ENCODE measurements at regions of chr9 and their contacts with region 1.

Region 1: GRCh38 chr9:136283291-136284235 is 20.3 kb downstream of the CCDC187 start:
- DNase-seq: peak; percentile 85
- ATAC-seq: peak; percentile 99
- H3K4me3 Mint-ChIP-seq: no peak overlapping the region
- H3K27ac Mint-ChIP-seq: no peak overlapping the region
- H3K4me1 Mint-ChIP-seq: peaks cover 3% of the 10 kb centered on the region
- H3K27me3 Mint-ChIP-seq: no peaks in the 10 kb centered on the region
- CTCF ChIP-seq: peak; percentile 80

Region 2: DNA sequence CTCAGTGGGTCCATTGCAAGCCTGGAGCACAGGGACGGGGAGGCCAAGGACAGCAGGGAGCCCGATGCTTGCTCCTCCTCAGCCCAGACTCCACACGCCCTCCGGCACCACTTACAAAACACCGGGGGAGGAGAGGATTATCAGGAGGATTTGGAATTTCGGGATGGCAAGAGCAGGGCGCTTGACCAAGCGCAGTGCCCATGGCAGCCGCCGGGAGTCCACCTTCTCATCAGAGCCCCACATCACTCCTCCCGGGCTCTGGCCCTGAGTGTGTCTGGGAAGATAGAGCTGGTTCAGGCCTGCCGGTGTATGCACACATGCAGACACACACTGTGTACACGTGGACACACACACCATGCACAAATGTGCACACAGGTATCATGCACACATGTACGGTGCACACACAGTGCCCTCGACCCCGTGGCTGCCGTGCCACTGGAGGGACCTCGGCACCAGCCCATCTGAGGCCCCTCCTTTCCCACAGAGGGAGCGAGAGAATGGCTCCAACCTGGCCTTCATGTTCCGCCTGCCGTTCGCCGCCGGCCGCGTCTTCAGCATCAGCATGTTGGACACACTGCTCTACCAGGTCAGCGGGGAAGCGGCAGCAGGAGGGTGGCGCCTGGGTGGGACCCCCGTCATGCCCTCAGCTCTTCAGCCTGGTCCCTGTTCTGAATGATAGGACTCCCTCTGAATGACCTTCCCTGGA is 499.9 kb before region 1 on chr9:
- CTCF ChIA-PET with region 1: no interaction called
- POLR2A ChIA-PET with region 1: no interaction called
- intact Hi-C with region 1: no loop called
- DNase-seq: no peak
- ATAC-seq: no peak
- H3K4me3 Mint-ChIP-seq: no peak overlapping the region
- H3K27ac Mint-ChIP-seq: no peak overlapping the region
- H3K4me1 Mint-ChIP-seq: no peaks in the 10 kb centered on the region
- H3K27me3 Mint-ChIP-seq: no peaks in the 10 kb centered on the region
- CTCF ChIP-seq: no peak

Region 3: GRCh38 chr9:136011703-136012521 is 271.7 kb before region 1 on chr9:
- CTCF ChIA-PET with region 1: no interaction called
- POLR2A ChIA-PET with region 1: no interaction called
- intact Hi-C with region 1: no loop called
- DNase-seq: no peak
- ATAC-seq: no peak
- H3K4me3 Mint-ChIP-seq: no peak overlapping the region
- H3K27ac Mint-ChIP-seq: no peak overlapping the region
- H3K4me1 Mint-ChIP-seq: no peaks in the 10 kb centered on the region
- H3K27me3 Mint-ChIP-seq: no peaks in the 10 kb centered on the region
- CTCF ChIP-seq: no peak

Region 4: GRCh38 chr9:136170006-136170901 is 113.3 kb before region 1 on chr9:
- CTCF ChIA-PET with region 1: interaction called, 6 read pairs
- POLR2A ChIA-PET with region 1: no interaction called
- intact Hi-C with region 1: loop called (anchors 2 kb)
- DNase-seq: peak; percentile 73
- ATAC-seq: peak; percentile 94
- H3K4me3 Mint-ChIP-seq: no peak overlapping the region
- H3K27ac Mint-ChIP-seq: no peak overlapping the region
- H3K4me1 Mint-ChIP-seq: no peaks in the 10 kb centered on the region
- H3K27me3 Mint-ChIP-seq: peaks cover 7% of the 10 kb centered on the region
- CTCF ChIP-seq: peak; percentile 79

Region 5: GRCh38 chr9:136267261-136268111 is 16.1 kb before region 1 on chr9:
- CTCF ChIA-PET with region 1: interaction called, 12 read pairs
- POLR2A ChIA-PET with region 1: no interaction called
- intact Hi-C with region 1: no loop called
- DNase-seq: peak; percentile 85
- ATAC-seq: peak; percentile 97
- H3K4me3 Mint-ChIP-seq: peak overlapping the region; percentile 71
- H3K27ac Mint-ChIP-seq: peak overlapping the region; percentile 74
- H3K4me1 Mint-ChIP-seq: peaks cover 10% of the 10 kb centered on the region
- H3K27me3 Mint-ChIP-seq: no peaks in the 10 kb centered on the region
- CTCF ChIP-seq: no peak